CD4-positive, alpha-beta T cell (primary cell): ENCODE measurements at regions of chr19 and their contacts with region 1.

Region 1: DNA sequence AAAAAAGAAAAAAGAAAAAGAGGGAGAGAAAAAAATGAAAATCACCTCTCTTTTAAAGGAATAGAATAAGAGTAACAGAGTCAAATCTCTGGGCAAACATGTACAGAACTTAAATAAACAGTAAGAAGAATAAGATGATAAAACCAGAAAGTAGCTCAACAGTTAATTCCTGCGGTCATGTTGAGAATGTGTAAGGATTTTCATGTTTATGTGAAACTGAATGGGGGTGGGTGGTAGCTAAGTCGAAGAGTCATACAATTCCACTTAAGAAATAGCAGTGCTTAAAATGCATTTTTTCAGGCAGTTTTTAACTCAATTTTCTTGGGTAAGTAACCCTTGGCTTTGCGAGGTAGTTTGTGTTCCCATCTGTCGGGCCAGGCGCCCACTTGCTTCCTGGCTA is 60.9 kb downstream of the PEX11G start:
- DNase-seq: no peak
- ATAC-seq: no peak
- H3K4me3 ChIP-seq: no peak overlapping the region
- H3K4me3 Mint-ChIP-seq: no peak overlapping the region
- H3K27ac ChIP-seq: no peak overlapping the region
- H3K27ac Mint-ChIP-seq: peak overlapping the region; percentile 73
- H3K4me1 ChIP-seq: peaks cover 26% of the 10 kb centered on the region
- H3K4me1 Mint-ChIP-seq: peaks cover 12% of the 10 kb centered on the region
- H3K27me3 ChIP-seq: no peaks in the 10 kb centered on the region
- H3K27me3 Mint-ChIP-seq: no peaks in the 10 kb centered on the region
- CTCF ChIP-seq: no peak

Region 2: DNA sequence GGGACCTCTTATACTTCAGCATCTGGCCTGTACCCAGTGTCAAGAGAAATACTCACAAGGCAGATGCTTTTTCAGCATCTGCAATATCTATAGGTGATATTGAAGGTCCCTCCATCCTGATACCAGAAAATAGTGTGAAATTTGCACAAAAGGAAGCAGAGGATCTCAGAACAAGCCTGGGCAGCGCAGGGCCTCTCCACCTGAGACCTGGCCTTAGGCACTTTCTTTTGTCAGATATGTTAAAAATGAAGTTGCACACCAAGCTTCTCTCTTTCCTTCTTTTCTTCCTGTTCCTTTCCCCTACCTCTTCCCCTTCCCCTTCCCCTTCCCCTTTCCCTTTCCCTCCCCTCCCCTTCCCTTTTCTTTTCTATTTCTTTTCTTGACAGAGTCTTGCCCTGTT is 17.0 kb before region 1 on chr19:
- CTCF ChIA-PET with region 1: no interaction called
- POLR2A ChIA-PET with region 1: interaction called, 4 read pairs
- intact Hi-C with region 1: loop called in 1 of 2 experiments (anchors 1 kb)
- DNase-seq: no peak
- ATAC-seq: no peak
- H3K4me3 ChIP-seq: no peak overlapping the region
- H3K4me3 Mint-ChIP-seq: no peak overlapping the region
- H3K27ac ChIP-seq: peak overlapping the region in 1 of 2 donors; percentile 7
- H3K27ac Mint-ChIP-seq: peak overlapping the region; percentile 55
- H3K4me1 ChIP-seq: peaks cover 5% of the 10 kb centered on the region
- H3K4me1 Mint-ChIP-seq: peaks cover 33% of the 10 kb centered on the region
- H3K27me3 ChIP-seq: no peaks in the 10 kb centered on the region
- H3K27me3 Mint-ChIP-seq: no peaks in the 10 kb centered on the region
- CTCF ChIP-seq: no peak

Region 3: GRCh38 chr19:7417671-7418324 is 10.1 kb before region 1 on chr19:
- CTCF ChIA-PET with region 1: no interaction called
- POLR2A ChIA-PET with region 1: interaction called, 4 read pairs
- intact Hi-C with region 1: loop called in 1 of 2 experiments (anchors 2 kb)
- DNase-seq: no peak
- ATAC-seq: no peak
- H3K4me3 ChIP-seq: no peak overlapping the region
- H3K4me3 Mint-ChIP-seq: no peak overlapping the region
- H3K27ac ChIP-seq: peak overlapping the region in 1 of 2 donors; percentile 17
- H3K27ac Mint-ChIP-seq: peak overlapping the region; percentile 72
- H3K4me1 ChIP-seq: peaks cover 17% of the 10 kb centered on the region
- H3K4me1 Mint-ChIP-seq: peaks cover 26% of the 10 kb centered on the region
- H3K27me3 ChIP-seq: no peaks in the 10 kb centered on the region
- H3K27me3 Mint-ChIP-seq: no peaks in the 10 kb centered on the region
- CTCF ChIP-seq: no peak

Region 4: GRCh38 chr19:7722231-7722651 is 294.3 kb after region 1 on chr19:
- CTCF ChIA-PET with region 1: no interaction called
- POLR2A ChIA-PET with region 1: no interaction called
- intact Hi-C with region 1: no loop called
- DNase-seq: no peak
- ATAC-seq: no peak
- H3K4me3 ChIP-seq: no peak overlapping the region
- H3K4me3 Mint-ChIP-seq: no peak overlapping the region
- H3K27ac ChIP-seq: no peak overlapping the region
- H3K27ac Mint-ChIP-seq: no peak overlapping the region
- H3K4me1 ChIP-seq: peaks cover 11% of the 10 kb centered on the region
- H3K4me1 Mint-ChIP-seq: no peaks in the 10 kb centered on the region
- H3K27me3 ChIP-seq: peaks cover 0 to under 1% of the 10 kb centered on the region in 2 experiments
- H3K27me3 Mint-ChIP-seq: peaks cover 6% of the 10 kb centered on the region
- CTCF ChIP-seq: no peak